BJ (cell line): ENCODE measurements at regions of chr13 and their contacts with region 1.

Region 1: DNA sequence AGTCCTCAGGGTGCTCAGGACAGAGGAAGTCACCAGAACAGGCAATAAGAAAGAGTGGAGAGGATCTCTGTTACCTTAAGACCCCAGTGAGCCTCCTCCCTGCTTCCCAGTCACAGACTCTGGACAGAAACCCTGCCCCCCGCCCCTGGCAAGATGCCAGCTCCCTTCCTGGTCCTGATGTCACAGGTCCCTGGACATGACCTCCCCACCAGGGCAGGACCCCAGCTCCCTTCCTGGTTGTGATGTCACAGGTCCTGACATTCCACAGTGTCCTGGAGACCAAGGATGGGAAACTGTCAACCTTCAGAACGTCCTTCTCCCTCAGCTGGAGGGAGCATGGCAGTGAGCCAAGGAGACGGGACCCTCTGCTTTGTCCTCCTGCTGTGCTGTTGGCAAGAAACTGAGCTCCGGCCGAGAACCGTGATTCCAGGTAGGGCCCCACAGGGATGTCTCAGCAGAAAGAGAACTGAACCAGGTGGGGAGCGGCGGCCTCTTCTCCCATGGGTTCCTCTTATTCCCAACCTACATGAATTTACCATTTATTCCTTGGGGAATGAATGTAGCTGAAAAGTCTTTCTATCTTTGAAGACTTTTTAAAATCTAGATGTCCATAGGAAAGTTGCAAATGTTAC is at the start of gene SPACA7:
- DNase-seq: no peak
- H3K4me3 ChIP-seq: no peak within 1 kb of the TSS
- H3K27me3 ChIP-seq: no peaks in the 10 kb centered on the region
- CTCF ChIP-seq: no peak
- polyA plus RNA-seq, gene SPACA7: not detected in 2 replicates

Region 2: GRCh38 chr13:111437856-111438547 is 938.2 kb before region 1 on chr13:
- CTCF ChIA-PET with region 1: no interaction called
- POLR2A ChIA-PET with region 1: interaction called, 23 read pairs
- DNase-seq: no peak
- H3K4me3 ChIP-seq: no peak overlapping the region
- H3K27me3 ChIP-seq: no peaks in the 10 kb centered on the region
- CTCF ChIP-seq: no peak

Region 3: GRCh38 chr13:112669881-112670499 is 293.8 kb after region 1 on chr13:
- CTCF ChIA-PET with region 1: no interaction called
- POLR2A ChIA-PET with region 1: no interaction called
- DNase-seq: no peak
- H3K4me3 ChIP-seq: no peak overlapping the region
- H3K27me3 ChIP-seq: peaks cover 4% of the 10 kb centered on the region
- CTCF ChIP-seq: no peak